ENCODE measurements at regions of chr1 and their contacts with region 1.

Region 1: DNA sequence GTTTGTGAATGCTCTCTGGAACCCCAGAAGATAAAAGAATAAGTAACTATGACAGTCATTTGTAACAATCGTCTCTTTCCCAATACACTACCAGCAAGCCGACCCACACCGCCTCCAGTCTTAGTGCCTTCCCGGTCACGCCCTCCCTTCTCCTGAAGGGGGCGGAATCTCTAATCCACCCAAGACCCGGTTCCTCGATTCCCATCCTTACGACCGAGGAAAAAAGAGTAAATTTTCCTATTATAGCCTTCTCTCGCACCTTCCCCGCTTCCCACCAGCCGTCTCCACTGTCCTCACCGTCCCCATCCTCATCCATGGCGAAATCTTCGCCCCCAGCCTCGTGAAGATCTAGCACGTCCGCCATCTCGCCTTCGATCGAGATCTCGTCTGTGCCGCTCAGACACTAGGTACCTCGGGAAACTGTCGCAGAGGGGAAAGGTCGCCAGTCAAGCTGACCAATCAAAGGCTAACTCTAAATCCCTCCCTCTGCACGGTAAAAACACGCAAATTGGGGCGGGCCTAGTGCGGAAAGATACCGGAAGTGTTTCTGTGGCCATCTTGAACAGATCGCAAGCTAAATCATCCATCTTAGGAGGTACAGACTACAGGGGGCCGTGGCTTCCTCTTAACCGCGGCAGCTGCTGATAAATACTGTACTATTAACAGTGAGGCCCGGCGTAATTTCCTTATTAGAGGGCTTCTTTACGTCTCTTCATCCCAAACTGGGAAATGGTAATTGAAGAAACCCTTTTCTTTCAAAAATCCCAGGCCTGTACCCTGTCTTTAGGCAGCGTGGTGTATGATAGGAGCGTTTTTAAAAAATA is at the start of gene RBM8A:
- DNase-seq: peak; percentile 85 to 91
- H3K4me3 ChIP-seq: peak within 1 kb of the TSS; percentile 81 to 97 (median 92)
- H3K27ac ChIP-seq: peak within 1 kb of the TSS; percentile 90
- H3K4me1 ChIP-seq: peaks cover 0 to 4% (median 2%) of the 10 kb centered on the region in 4 experiments; a peak in 4 of 7 replicates
- H3K27me3 ChIP-seq: no peaks in the 10 kb centered on the region
- CTCF ChIP-seq: peak; percentile 27 to 61 (median 47); a peak in 3 of 4 replicates
- EP300 ChIP-seq: no peak
- POLR2A ChIP-seq: peak; percentile 88 to 92
- RAD21 ChIP-seq: no peak
- total RNA-seq, gene RBM8A: 216 and 222 TPM in 2 replicates

Region 2: GRCh38 chr1:145906954-145907753 is 20.1 kb before region 1 on chr1:
- CTCF ChIA-PET with region 1: interaction called, 11 read pairs
- POLR2A ChIA-PET with region 1: interaction called, 7 read pairs
- DNase-seq: no peak
- H3K4me3 ChIP-seq: no peak overlapping the region
- H3K27ac ChIP-seq: no peak overlapping the region
- H3K4me1 ChIP-seq: peaks cover 0 to 3% (median 0%) of the 10 kb centered on the region in 4 experiments; a peak in 2 of 7 replicates
- H3K27me3 ChIP-seq: no peaks in the 10 kb centered on the region
- CTCF ChIP-seq: no peak
- EP300 ChIP-seq: no peak
- POLR2A ChIP-seq: no peak
- RAD21 ChIP-seq: no peak

Region 3: DNA sequence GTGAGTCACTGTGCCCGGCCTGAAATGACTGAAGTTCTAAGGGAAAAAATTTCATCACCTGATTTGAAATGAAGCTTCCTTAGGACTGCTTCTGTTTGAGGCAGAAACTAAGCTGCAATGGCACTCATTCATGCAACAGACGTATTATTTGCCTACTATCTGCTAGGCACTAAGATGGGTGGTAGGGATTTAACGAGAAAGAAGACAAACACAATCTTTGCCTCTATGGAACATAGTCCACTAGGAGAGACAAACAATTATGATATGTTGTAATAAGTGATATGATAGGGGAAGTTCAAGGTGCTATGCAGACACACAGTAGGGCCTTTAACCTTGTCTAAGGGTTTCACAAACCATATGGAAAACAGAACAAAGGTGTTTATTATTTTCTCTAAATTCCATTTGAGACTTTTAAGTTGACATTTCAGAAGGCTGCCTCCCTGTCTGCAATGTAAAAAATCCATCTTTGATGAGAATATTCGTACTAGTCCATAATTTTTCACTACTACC is 19.3 kb after region 1 on chr1:
- CTCF ChIA-PET with region 1: interaction called, 5 read pairs
- POLR2A ChIA-PET with region 1: interaction called, 11 read pairs
- DNase-seq: no peak
- H3K4me3 ChIP-seq: no peak overlapping the region
- H3K27ac ChIP-seq: no peak overlapping the region
- H3K4me1 ChIP-seq: peaks cover 0 to 8% (median 2%) of the 10 kb centered on the region in 4 experiments; a peak in 4 of 7 replicates
- H3K27me3 ChIP-seq: no peaks in the 10 kb centered on the region
- CTCF ChIP-seq: no peak
- EP300 ChIP-seq: no peak
- POLR2A ChIP-seq: no peak
- RAD21 ChIP-seq: no peak

Region 4: GRCh38 chr1:145957443-145958319 is 30.4 kb after region 1 on chr1 and contains the start of gene LIX1L:
- CTCF ChIA-PET with region 1: interaction called, 18 read pairs
- POLR2A ChIA-PET with region 1: interaction called, 31 read pairs
- DNase-seq: peak; percentile 83 to 93
- H3K4me3 ChIP-seq: peak within 1 kb of the TSS; percentile 42 to 67 (median 52)
- H3K27ac ChIP-seq: no peak within 1 kb of the TSS
- H3K4me1 ChIP-seq: peaks cover 0 to 15% (median 9%) of the 10 kb centered on the region in 4 experiments; a peak in 6 of 7 replicates
- H3K27me3 ChIP-seq: peaks cover 17 to 66% (median 52%) of the 10 kb centered on the region in 4 experiments
- CTCF ChIP-seq: no peak
- EP300 ChIP-seq: no peak
- POLR2A ChIP-seq: no peak
- RAD21 ChIP-seq: no peak; a peak in 1 of 4 replicates
- total RNA-seq, gene LIX1L: 2.9 and 3.0 TPM in 2 replicates

Region 5: DNA sequence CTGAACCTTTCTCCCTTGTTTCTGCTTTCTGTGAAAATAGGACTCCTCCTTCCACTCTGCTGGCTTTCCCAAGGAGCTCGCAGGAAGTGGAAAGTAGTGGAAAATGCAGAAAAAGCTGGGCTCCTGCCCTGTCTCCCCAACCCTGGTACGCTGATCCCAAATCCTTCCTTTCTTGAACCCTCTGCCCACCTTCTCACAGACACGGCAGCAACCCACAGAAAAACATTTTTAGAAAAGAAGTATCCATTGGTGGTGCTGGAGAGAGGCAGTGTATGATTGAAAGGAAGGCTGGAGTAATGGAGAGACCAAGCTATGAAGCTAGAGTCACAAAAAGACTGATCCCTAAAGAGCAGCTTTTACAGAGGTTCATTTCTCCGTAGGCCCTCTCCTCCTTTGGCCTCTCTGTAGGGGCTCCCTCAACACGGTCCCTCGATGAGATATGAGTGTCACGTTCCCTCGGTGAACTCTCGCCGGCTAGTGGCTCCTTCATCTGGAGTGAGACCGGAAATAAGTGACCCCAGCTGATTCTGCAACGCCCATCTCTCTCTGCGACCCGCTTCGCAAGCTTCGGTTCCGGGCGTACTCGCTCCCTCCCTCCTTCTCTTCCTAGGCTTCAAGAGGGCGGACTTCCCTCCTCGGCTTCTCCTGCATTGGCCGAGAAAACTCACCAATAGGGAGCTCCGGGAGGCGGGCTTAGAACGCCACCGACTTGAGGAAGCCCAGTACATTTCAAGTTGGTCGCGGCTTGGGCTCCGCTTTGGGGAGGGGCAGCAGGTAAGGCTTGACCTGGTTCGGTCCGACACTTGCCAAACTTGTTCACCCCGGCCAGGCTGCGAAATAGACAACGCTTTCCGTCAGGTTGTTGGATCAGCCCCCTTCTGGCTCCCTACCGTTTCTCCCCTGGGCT is 37.0 kb after region 1 on chr1 and contains the starts of genes ANKRD34A and POLR3GL:
- CTCF ChIA-PET with region 1: interaction called, 18 read pairs
- POLR2A ChIA-PET with region 1: interaction called, 31 read pairs
- DNase-seq: peak; percentile 87 to 94
- H3K4me3 ChIP-seq: peak within 1 kb of the TSS; percentile 54 to 81 (median 68)
- H3K27ac ChIP-seq: no peak within 1 kb of the TSS
- H3K4me1 ChIP-seq: peaks cover 0 to 17% (median 11%) of the 10 kb centered on the region in 4 experiments; a peak in 6 of 7 replicates
- H3K27me3 ChIP-seq: peaks cover 25 to 44% (median 42%) of the 10 kb centered on the region in 4 experiments
- CTCF ChIP-seq: no peak
- EP300 ChIP-seq: no peak
- POLR2A ChIP-seq: peak in 1 of 2 experiments; percentile 75; a peak in 2 of 3 replicates
- RAD21 ChIP-seq: no peak
- total RNA-seq, gene ANKRD34A: 0.20 and 0.46 TPM in 2 replicates
- total RNA-seq, gene POLR3GL: 2.3 and 3.1 TPM in 2 replicates

Measured in H1 (cell line).